ENCODE measurements at regions of chr18 and their contacts with region 1.

Region 1: DNA sequence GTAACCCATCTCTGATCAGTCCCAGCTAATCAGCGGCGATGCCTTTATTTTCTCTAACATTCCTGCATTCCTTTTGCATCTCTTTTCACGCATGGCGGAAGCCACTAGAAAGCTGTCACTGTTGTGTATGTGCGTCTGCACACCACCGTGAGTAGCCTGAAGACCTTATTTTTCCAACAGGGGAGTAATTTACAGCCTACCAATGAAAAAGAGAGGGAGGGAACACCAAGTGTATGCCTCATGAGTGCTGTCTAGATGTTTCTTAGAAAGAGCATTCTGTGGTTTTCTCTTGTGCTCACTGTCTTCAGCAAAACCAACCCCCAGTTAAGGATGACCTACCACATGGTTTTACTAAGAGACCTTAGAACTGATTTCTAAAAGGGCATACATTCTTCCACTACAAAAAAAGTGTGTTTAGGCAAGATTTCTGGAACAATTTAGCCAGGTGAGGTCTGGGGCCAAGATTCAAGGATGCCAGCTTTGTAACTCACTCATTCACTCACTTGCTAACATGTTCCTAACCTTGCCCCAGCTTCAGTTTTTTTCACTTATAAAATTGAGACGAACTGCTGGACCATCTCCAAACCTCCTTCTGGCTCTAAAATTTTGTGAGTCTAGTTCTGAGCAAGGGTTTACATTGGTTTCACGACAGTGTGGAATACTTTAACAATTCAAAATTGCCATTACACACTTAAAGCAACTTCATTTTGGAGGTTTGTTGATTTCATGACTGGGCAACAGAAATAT is 51.4 kb downstream of the BCL2 start:
- DNase-seq: peak in 1 of 14 experiments; percentile 51
- ATAC-seq: peak; percentile 54
- H3K4me3 ChIP-seq: no peak overlapping the region
- H3K4me3 Mint-ChIP-seq: peak overlapping the region; percentile 26
- H3K27ac ChIP-seq: no peak overlapping the region
- H3K27ac Mint-ChIP-seq: peak overlapping the region; percentile 19
- H3K4me1 ChIP-seq: peaks cover 31% of the 10 kb centered on the region
- H3K4me1 Mint-ChIP-seq: peaks cover 63% of the 10 kb centered on the region
- H3K27me3 ChIP-seq: no peaks in the 10 kb centered on the region
- H3K27me3 Mint-ChIP-seq: no peaks in the 10 kb centered on the region
- CTCF ChIP-seq: no peak

Region 2: GRCh38 chr18:62877411-62878221 is 390.5 kb before region 1 on chr18:
- CTCF ChIA-PET with region 1: no interaction called
- POLR2A ChIA-PET with region 1: no interaction called
- intact Hi-C with region 1: no loop called
- DNase-seq: no peak
- ATAC-seq: no peak
- H3K4me3 ChIP-seq: no peak overlapping the region
- H3K4me3 Mint-ChIP-seq: no peak overlapping the region
- H3K27ac ChIP-seq: no peak overlapping the region
- H3K27ac Mint-ChIP-seq: no peak overlapping the region
- H3K4me1 ChIP-seq: no peaks in the 10 kb centered on the region
- H3K4me1 Mint-ChIP-seq: peaks cover 9% of the 10 kb centered on the region
- H3K27me3 ChIP-seq: no peaks in the 10 kb centered on the region
- H3K27me3 Mint-ChIP-seq: no peaks in the 10 kb centered on the region
- CTCF ChIP-seq: no peak

Region 3: GRCh38 chr18:63286926-63287325 is 18.8 kb after region 1 on chr18:
- CTCF ChIA-PET with region 1: interaction called, 3 read pairs
- POLR2A ChIA-PET with region 1: interaction called, 3 read pairs
- intact Hi-C with region 1: loop called in 1 of 2 experiments (anchors 2 kb)
- DNase-seq: no peak
- ATAC-seq: no peak
- H3K4me3 ChIP-seq: no peak overlapping the region
- H3K4me3 Mint-ChIP-seq: no peak overlapping the region
- H3K27ac ChIP-seq: no peak overlapping the region
- H3K27ac Mint-ChIP-seq: no peak overlapping the region
- H3K4me1 ChIP-seq: peaks cover 72% of the 10 kb centered on the region
- H3K4me1 Mint-ChIP-seq: peaks cover 14% of the 10 kb centered on the region
- H3K27me3 ChIP-seq: no peaks in the 10 kb centered on the region
- H3K27me3 Mint-ChIP-seq: no peaks in the 10 kb centered on the region
- CTCF ChIP-seq: no peak